ENCODE measurements at regions of chr19 and their contacts with region 1.

Region 1: GRCh38 chr19:40305403-40305802 is 20.3 kb upstream of the AKT2 start:
- DNase-seq: peak; percentile 90
- ATAC-seq: peak; percentile 98
- H3K4me3 ChIP-seq: no peak overlapping the region
- H3K27ac ChIP-seq: no peak overlapping the region
- H3K4me1 ChIP-seq: no peaks in the 10 kb centered on the region
- H3K27me3 ChIP-seq: no peaks in the 10 kb centered on the region
- CTCF ChIP-seq: peak; percentile 90
- POLR2A ChIP-seq: no peak
- RAD21 ChIP-seq: peak; percentile 90

Region 2: GRCh38 chr19:40139533-40140287 is 165.7 kb before region 1 on chr19:
- CTCF ChIA-PET with region 1: interaction called, 3 read pairs
- POLR2A ChIA-PET with region 1: no interaction called
- dilution Hi-C with region 1: no loop called
- in situ Hi-C with region 1: no loop called
- intact Hi-C with region 1: loop called (anchors 5 kb)
- DNase-seq: peak; percentile 63
- ATAC-seq: peak; percentile 77
- H3K4me3 ChIP-seq: no peak overlapping the region
- H3K27ac ChIP-seq: no peak overlapping the region
- H3K4me1 ChIP-seq: no peaks in the 10 kb centered on the region
- H3K27me3 ChIP-seq: peaks cover 10% of the 10 kb centered on the region
- CTCF ChIP-seq: peak; percentile 93
- POLR2A ChIP-seq: peak; percentile 28; the same call in 1 of the 2 replicates
- RAD21 ChIP-seq: peak; percentile 94

Region 3: DNA sequence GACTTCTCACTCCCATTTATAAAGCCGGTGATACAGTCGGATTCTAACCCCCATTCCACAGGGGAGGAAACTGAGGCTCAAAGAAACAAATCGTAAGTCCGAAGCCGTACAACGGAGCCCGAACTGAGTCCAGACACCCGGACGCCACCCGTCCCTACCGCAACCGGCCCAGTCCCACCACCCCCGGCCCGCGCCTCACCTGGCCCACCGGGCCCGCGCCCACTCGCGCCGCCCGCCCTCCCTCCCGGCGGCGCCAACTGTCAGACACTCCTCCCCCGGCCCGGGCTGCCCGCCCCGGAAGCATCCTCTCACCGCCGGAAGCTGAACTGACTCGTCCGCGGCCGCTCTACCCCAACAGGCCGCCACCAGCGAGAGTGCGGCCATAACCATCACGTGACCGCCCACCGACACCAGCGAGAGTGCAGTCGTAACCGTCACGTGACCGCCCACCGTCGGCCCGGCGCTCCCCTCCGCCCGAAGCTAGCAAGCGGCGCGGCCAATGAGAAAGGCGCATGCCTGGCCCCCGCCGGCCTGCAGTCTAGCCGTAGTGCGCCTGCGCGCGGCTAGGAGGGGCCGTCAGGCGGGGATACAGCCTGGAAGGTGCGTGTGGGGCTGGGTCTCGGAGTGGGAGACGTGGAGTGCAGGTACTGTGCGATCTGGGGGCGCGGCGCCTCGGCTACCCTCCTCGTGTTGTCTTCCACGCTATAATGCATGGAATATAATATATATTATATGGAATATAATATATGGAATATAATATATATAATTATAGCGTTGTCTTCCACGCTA is 42.9 kb after region 1 on chr19 and contains the starts of genes C19orf47 and PLD3:
- CTCF ChIA-PET with region 1: no interaction called
- POLR2A ChIA-PET with region 1: interaction called, 16 read pairs
- dilution Hi-C with region 1: no loop called
- in situ Hi-C with region 1: no loop called
- intact Hi-C with region 1: no loop called
- DNase-seq: peak; percentile 99
- ATAC-seq: peak; percentile 97
- H3K4me3 ChIP-seq: peak within 1 kb of the TSS; percentile 70
- H3K27ac ChIP-seq: peak within 1 kb of the TSS; percentile 63
- H3K4me1 ChIP-seq: peaks cover 4% of the 10 kb centered on the region; the same call in 1 of the 2 replicates
- H3K27me3 ChIP-seq: no peaks in the 10 kb centered on the region
- CTCF ChIP-seq: no peak
- POLR2A ChIP-seq: peak; percentile 69
- RAD21 ChIP-seq: no peak
- total RNA-seq, gene C19orf47: 3.6 and 4.4 TPM in 2 replicates
- total RNA-seq, gene PLD3: 117 and 120 TPM in 2 replicates

Region 4: GRCh38 chr19:40413291-40413845 is 108.0 kb after region 1 on chr19 and contains the start of gene PRX:
- CTCF ChIA-PET with region 1: no interaction called
- POLR2A ChIA-PET with region 1: no interaction called
- dilution Hi-C with region 1: no loop called
- in situ Hi-C with region 1: no loop called
- intact Hi-C with region 1: no loop called
- DNase-seq: no peak
- ATAC-seq: no peak
- H3K4me3 ChIP-seq: no peak within 1 kb of the TSS
- H3K27ac ChIP-seq: no peak within 1 kb of the TSS
- H3K4me1 ChIP-seq: peaks cover 7% of the 10 kb centered on the region
- H3K27me3 ChIP-seq: no peaks in the 10 kb centered on the region
- CTCF ChIP-seq: no peak
- POLR2A ChIP-seq: no peak
- RAD21 ChIP-seq: no peak
- total RNA-seq, gene PRX: 0.83 and 0.90 TPM in 2 replicates

Region 5: DNA sequence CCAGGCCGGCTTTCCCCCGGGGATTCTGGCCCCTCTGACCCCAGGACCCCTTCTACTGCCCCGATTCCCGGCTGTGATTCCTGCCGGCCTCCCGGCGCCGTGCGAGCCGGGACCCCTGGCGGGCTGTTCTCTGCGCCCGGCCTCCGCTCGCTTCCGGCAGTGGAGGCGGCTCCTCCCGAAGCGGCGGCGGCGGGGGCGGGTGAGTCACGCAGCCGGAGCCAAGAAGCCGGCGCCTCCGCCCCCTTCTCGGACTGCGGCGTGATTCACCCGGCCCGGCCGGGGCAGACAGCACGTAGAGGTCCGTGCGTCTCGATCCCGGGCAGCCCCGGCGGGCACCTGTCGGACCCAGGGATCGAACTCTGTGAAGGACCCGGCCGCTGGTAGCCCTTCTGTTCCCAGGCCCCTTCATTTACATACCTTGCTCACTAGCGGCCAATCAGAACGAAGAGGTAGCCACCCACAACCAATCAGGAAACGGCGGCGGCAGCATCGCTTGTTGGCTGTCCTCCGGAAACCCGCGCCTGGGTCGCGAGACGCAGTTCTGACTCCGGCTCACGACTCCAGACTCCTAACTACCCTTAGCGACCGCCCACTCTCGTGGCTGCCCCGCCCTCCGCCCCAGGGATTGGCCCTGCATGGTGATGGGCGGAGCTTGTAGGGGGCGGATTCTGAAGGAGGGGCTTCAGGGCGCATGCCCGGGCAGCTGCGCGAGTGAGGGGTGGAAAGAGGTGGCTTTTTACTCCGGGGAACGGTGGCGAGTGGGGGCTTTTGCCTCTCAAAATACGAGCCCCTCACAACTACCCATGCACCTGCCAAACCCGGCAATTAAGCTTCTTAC is 120.3 kb after region 1 on chr19 and contains the start of gene SERTAD1:
- CTCF ChIA-PET with region 1: no interaction called
- POLR2A ChIA-PET with region 1: no interaction called
- dilution Hi-C with region 1: no loop called
- in situ Hi-C with region 1: no loop called
- intact Hi-C with region 1: loop called (anchors 10 kb)
- DNase-seq: peak; percentile 99
- ATAC-seq: peak; percentile 90
- H3K4me3 ChIP-seq: peak within 1 kb of the TSS; percentile 71
- H3K27ac ChIP-seq: peak within 1 kb of the TSS; percentile 98
- H3K4me1 ChIP-seq: peaks cover 2% of the 10 kb centered on the region; the same call in 1 of the 2 replicates
- H3K27me3 ChIP-seq: no peaks in the 10 kb centered on the region
- CTCF ChIP-seq: peak; percentile 49
- POLR2A ChIP-seq: peak; percentile 99
- RAD21 ChIP-seq: no peak
- total RNA-seq, gene SERTAD1: 25.6 and 27.4 TPM in 2 replicates

Region 6: GRCh38 chr19:40523322-40524047 is 218.1 kb after region 1 on chr19:
- CTCF ChIA-PET with region 1: no interaction called
- POLR2A ChIA-PET with region 1: no interaction called
- dilution Hi-C with region 1: no loop called
- in situ Hi-C with region 1: loop called (anchors 25 kb)
- intact Hi-C with region 1: loop called (anchors 5 kb)
- DNase-seq: peak; percentile 44
- ATAC-seq: peak; percentile 85
- H3K4me3 ChIP-seq: no peak overlapping the region
- H3K27ac ChIP-seq: no peak overlapping the region
- H3K4me1 ChIP-seq: no peaks in the 10 kb centered on the region
- H3K27me3 ChIP-seq: peaks cover 18% of the 10 kb centered on the region; the same call in 1 of the 2 replicates
- CTCF ChIP-seq: peak; percentile 62
- POLR2A ChIP-seq: no peak
- RAD21 ChIP-seq: peak; percentile 49

Region 7: GRCh38 chr19:40603389-40604135 is 298.2 kb after region 1 on chr19:
- CTCF ChIA-PET with region 1: no interaction called
- POLR2A ChIA-PET with region 1: no interaction called
- dilution Hi-C with region 1: no loop called
- in situ Hi-C with region 1: loop called (anchors 10 kb)
- intact Hi-C with region 1: loop called (anchors 1 kb)
- DNase-seq: peak; percentile 92
- ATAC-seq: peak; percentile 85
- H3K4me3 ChIP-seq: peak overlapping the region; percentile 9
- H3K27ac ChIP-seq: peak overlapping the region; percentile 96
- H3K4me1 ChIP-seq: peaks cover 20% of the 10 kb centered on the region
- H3K27me3 ChIP-seq: no peaks in the 10 kb centered on the region
- CTCF ChIP-seq: peak; percentile 21; the same call in 1 of the 2 replicates
- POLR2A ChIP-seq: no peak
- RAD21 ChIP-seq: no peak

Measured in IMR-90 (cell line).